CD4-positive, alpha-beta memory T cell (primary cell): ENCODE measurements at regions of chr7 and their contacts with region 1.

Region 1: DNA sequence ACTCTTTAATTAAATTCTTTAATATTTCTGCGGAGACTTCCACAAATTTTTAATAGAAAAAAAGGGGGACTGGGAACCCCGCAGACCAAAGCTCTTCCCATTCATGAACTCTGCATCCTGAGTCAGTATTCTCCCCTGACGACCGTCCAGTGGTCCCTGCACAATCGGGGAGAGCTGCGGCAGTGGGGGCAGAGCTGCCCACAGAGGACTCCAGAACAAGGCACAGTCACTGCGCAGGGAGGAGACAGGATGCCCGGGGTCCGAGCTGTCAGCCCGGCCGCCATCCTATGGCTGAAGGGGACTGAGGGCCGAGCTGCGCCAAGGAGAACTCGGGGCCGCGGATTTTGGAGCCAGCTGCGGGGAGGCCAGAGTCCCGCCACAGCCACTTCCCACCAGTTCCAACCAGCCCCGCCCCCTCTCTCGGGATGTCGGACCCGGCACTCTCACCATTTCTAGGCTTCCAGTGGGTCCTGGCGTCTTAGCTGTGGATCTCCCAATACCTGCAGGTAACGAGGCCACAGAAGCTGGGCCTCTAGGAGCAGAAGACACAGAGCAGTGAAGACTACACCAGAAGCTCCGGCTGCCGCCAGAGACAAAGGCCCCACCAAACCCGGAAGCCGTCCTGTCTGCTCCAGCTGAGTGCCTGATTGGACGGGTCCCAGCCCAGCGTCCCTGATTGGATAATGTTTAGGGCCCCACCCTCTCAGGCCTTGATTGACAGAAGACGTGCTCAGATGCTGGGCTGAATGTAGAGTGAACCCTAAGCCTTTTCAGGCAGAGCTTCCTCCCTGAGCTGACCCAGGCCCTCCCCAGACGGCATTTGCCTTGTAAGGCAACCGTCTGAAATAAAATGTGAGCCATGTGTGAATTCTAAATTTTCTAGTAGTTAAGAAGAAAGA is at the start of gene ERV3-1:
- DNase-seq: peak; percentile 91 to 98 (median 93)
- H3K4me3 ChIP-seq: peak within 1 kb of the TSS; percentile 79 to 95
- H3K4me3 Mint-ChIP-seq: peak within 1 kb of the TSS; percentile 93 to 97 (median 96)
- H3K27ac ChIP-seq: peak within 1 kb of the TSS; percentile 84
- H3K27ac Mint-ChIP-seq: peak within 1 kb of the TSS; percentile 90 to 98 (median 97)
- H3K4me1 ChIP-seq: peaks cover 30% of the 10 kb centered on the region
- H3K4me1 Mint-ChIP-seq: peaks cover 29 to 52% (median 42%) of the 10 kb centered on the region in 4 donors
- H3K27me3 ChIP-seq: no peaks in the 10 kb centered on the region
- H3K27me3 Mint-ChIP-seq: no peaks in the 10 kb centered on the region
- total RNA-seq, gene ERV3-1: 18.4 to 19.9 TPM

Region 2: DNA sequence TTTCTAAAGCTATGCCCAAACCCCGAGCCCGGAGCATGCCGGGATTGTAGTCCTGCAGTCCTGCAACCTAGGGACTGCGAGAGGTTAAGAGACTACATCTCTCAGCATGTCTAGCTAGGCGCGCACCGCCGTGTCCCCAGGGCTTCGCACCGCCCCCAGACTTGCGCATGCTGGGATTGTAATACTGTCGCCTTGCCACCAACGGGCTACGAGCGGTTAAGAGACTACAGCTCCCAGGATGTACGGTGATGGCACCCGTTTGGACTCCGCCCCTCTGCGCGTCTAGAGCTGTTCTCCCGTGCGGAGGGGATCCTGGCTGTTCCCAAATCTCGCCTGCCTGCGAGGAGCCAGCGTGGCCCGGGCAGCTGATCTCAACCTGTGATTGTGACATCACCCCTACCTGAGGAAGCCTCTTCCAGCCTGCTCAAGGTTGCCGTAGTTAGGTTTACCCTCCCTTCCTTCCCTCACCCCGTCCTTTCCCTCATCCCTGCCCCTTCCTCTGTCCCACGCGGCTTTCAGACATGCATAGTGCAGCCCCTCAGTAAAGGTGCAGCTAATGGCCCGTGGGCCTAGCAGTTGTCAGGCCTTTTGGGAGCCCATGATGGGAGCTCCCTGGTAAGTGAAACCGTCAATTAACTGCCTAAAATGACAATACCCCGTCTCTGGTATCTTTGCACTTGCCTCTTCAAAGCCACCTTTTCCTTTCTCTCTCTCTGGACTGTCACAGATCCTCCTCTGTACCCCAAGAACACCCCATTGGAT is 698.9 kb before region 1 on chr7:
- CTCF ChIA-PET with region 1: no interaction called
- POLR2A ChIA-PET with region 1: interaction called, 4 read pairs
- intact Hi-C with region 1: loop called (anchors 1 kb)
- DNase-seq: peak; percentile 91 to 97 (median 94)
- H3K4me3 ChIP-seq: peak overlapping the region; percentile 95 to 97
- H3K4me3 Mint-ChIP-seq: peak overlapping the region; percentile 92 to 100 (median 96)
- H3K27ac ChIP-seq: peak overlapping the region; percentile 71
- H3K27ac Mint-ChIP-seq: peak overlapping the region; percentile 94 to 99 (median 97)
- H3K4me1 ChIP-seq: peaks cover 13% of the 10 kb centered on the region
- H3K4me1 Mint-ChIP-seq: peaks cover 10 to 29% (median 16%) of the 10 kb centered on the region in 4 donors
- H3K27me3 ChIP-seq: no peaks in the 10 kb centered on the region
- H3K27me3 Mint-ChIP-seq: no peaks in the 10 kb centered on the region

Region 3: GRCh38 chr7:64665980-64666662 is 340.2 kb before region 1 on chr7 and contains the start of gene ZNF107:
- CTCF ChIA-PET with region 1: no interaction called
- POLR2A ChIA-PET with region 1: interaction called, 13 read pairs
- intact Hi-C with region 1: loop called (anchors 10 kb)
- DNase-seq: peak; percentile 86 to 92 (median 88)
- H3K4me3 ChIP-seq: peak within 1 kb of the TSS; percentile 85 to 90
- H3K4me3 Mint-ChIP-seq: peak within 1 kb of the TSS; percentile 97 to 98 (median 97)
- H3K27ac ChIP-seq: peak within 1 kb of the TSS; percentile 92
- H3K27ac Mint-ChIP-seq: peak within 1 kb of the TSS; percentile 97 to 99 (median 98)
- H3K4me1 ChIP-seq: peaks cover 38% of the 10 kb centered on the region
- H3K4me1 Mint-ChIP-seq: peaks cover 42 to 80% (median 59%) of the 10 kb centered on the region in 4 donors
- H3K27me3 ChIP-seq: no peaks in the 10 kb centered on the region
- H3K27me3 Mint-ChIP-seq: no peaks in the 10 kb centered on the region
- total RNA-seq, gene ZNF107: 30.2 to 30.9 TPM

Region 4: DNA sequence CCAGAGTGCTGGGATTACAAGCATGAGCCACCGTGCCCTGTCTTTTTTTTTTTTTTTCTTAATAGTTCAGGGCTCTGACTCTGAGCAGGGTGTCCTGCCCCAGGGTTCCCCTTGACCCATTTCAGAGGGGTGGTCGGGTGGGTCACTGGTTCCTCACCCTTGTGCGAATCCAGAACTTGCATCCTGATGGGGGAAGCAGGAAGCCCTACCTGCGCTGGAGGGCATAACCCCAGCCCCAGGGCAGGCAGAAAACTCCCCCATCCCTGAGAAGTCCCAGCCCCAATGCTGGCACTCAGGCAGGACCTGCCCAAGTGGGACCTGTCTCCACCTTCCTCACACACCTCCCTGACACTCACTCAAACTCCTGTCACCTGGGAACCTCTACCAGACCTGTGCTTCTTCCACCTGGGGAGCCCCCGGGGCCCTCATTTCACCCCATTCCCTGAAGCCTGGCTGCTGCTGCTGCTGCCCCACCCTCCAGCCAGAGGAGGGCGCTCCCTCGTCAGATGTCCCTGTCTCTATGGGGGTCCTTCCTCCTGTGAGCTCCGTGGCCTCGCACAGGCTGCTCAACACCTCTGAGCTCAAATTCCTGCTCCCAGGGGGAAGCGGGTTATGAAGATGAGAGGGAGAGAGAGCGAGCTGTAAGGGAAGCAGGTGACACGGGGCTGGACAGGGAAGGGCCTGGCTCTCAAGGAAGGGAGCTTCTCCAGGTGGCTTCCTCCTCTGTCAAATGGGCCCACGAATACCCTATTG is 118.4 kb before region 1 on chr7:
- CTCF ChIA-PET with region 1: no interaction called
- POLR2A ChIA-PET with region 1: interaction called, 3 read pairs
- intact Hi-C with region 1: loop called (anchors 5 kb)
- DNase-seq: peak in 4 of 5 donors; percentile 15 to 41 (median 30)
- H3K4me3 ChIP-seq: peak overlapping the region; percentile 16 to 65
- H3K4me3 Mint-ChIP-seq: peak overlapping the region; percentile 82 to 97 (median 90)
- H3K27ac ChIP-seq: no peak overlapping the region
- H3K27ac Mint-ChIP-seq: peak overlapping the region in 5 of 7 donors; percentile 9 to 78 (median 66)
- H3K4me1 ChIP-seq: peaks cover 18% of the 10 kb centered on the region
- H3K4me1 Mint-ChIP-seq: peaks cover 5 to 26% (median 13%) of the 10 kb centered on the region in 4 donors
- H3K27me3 ChIP-seq: peaks cover 5% of the 10 kb centered on the region
- H3K27me3 Mint-ChIP-seq: peaks cover 36 to 48% of the 10 kb centered on the region in 2 donors

Region 5: DNA sequence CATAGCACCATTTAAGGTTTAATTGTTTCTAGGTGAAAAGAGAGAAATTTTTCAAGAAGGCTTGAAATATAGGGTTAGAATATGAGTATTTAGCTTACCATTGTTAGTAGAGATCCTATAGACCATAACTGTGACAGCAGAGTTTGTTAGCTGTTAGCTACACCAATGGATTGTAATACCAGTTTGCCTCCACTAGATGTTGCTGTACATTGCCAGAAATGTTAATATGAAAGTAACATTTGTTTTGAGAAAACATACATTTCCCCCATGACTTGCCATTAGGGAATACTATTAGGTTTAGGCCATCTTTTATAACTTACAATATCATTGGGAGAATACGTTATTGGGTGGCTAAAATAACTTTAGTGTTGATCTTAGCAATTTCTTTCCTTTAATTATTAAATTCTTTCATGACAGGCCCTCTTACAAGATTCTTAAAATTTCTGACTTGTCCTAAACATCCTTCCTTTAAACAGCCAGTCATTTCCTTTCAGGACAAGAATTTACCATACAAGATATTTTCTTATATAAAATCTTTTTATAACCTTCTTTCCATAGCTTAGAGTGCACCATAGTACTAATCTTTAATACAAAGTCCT is 55.0 kb before region 1 on chr7:
- CTCF ChIA-PET with region 1: interaction called, 3 read pairs
- POLR2A ChIA-PET with region 1: no interaction called
- intact Hi-C with region 1: loop called (anchors 1 kb)
- DNase-seq: peak; percentile 40 to 49 (median 42)
- H3K4me3 ChIP-seq: no peak overlapping the region
- H3K4me3 Mint-ChIP-seq: no peak overlapping the region
- H3K27ac ChIP-seq: no peak overlapping the region
- H3K27ac Mint-ChIP-seq: no peak overlapping the region
- H3K4me1 ChIP-seq: no peaks in the 10 kb centered on the region
- H3K4me1 Mint-ChIP-seq: peaks cover 0 to 6% (median 2%) of the 10 kb centered on the region in 4 donors
- H3K27me3 ChIP-seq: no peaks in the 10 kb centered on the region
- H3K27me3 Mint-ChIP-seq: peaks cover 28 to 31% of the 10 kb centered on the region in 2 donors

Region 6: DNA sequence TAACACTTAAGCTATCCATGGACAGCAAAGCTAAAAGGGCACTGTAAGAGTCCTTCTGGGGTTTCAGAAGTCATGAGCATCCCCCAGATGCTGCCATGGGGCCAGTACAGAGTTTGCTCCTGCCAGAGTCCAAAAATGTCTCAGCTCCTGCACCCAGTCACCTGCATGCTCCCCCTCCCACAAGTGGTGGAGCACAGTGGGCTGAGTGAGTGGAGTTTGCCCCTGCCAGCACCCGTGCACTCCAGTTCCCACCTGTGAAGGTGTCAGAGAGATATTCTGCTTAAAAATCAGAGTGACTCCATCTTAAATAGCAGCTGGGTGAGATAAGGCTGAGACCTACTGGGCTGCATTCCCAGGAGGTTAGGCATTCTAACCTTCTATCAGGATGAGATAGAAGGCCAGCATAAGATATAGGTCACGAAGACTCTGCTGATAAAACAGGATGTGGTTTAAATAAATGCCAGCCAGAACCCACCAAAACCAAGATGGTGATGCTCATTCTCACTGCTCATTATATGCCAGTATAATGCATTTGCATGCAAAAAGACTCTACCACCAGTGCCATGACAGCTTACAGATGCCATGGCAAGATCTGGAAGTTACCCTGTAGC is 227.2 kb after region 1 on chr7:
- CTCF ChIA-PET with region 1: no interaction called
- POLR2A ChIA-PET with region 1: no interaction called
- intact Hi-C with region 1: no loop called
- DNase-seq: peak in 1 of 5 donors; percentile 15
- H3K4me3 ChIP-seq: no peak overlapping the region
- H3K4me3 Mint-ChIP-seq: peak overlapping the region in 6 of 8 donors; percentile 3 to 52 (median 26)
- H3K27ac ChIP-seq: no peak overlapping the region
- H3K27ac Mint-ChIP-seq: peak overlapping the region in 1 of 7 donors; percentile 50
- H3K4me1 ChIP-seq: peaks cover 14% of the 10 kb centered on the region
- H3K4me1 Mint-ChIP-seq: peaks cover 24 to 39% (median 32%) of the 10 kb centered on the region in 4 donors
- H3K27me3 ChIP-seq: no peaks in the 10 kb centered on the region
- H3K27me3 Mint-ChIP-seq: no peaks in the 10 kb centered on the region

Region 7: DNA sequence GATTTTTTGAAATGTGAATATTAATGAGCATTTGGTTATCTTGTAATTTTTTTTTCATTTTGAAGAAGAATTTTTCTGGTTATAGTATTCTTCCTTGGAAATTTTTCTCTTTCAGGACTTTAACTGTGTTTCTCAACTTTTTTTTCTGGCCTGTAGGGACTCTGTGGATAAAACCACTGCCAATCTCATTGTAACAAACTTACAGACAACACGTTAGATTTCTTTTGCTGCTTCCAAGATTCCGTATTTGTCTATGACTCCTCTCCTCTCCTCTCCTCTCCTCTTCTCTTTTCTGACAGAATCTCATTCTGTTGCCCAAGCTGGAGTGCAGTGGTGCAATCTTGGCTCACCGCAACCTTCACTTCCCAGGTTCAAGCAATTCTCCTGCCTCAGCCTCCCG is 347.9 kb after region 1 on chr7:
- CTCF ChIA-PET with region 1: no interaction called
- POLR2A ChIA-PET with region 1: no interaction called
- intact Hi-C with region 1: no loop called
- DNase-seq: no peak
- H3K4me3 ChIP-seq: no peak overlapping the region
- H3K4me3 Mint-ChIP-seq: no peak overlapping the region
- H3K27ac ChIP-seq: no peak overlapping the region
- H3K27ac Mint-ChIP-seq: no peak overlapping the region
- H3K4me1 ChIP-seq: no peaks in the 10 kb centered on the region
- H3K4me1 Mint-ChIP-seq: no peaks in the 10 kb centered on the region
- H3K27me3 ChIP-seq: no peaks in the 10 kb centered on the region
- H3K27me3 Mint-ChIP-seq: peaks cover 8 to 13% of the 10 kb centered on the region in 2 donors